HCT116 (cell line): ENCODE measurements at regions of chr7 and their contacts with region 1.

Region 1: GRCh38 chr7:143008007-143008901 is 18.7 kb downstream of the OR9A2 start:
- DNase-seq: peak; percentile 46
- ATAC-seq: peak; percentile 95
- H3K4me3 ChIP-seq: no peak overlapping the region
- H3K27ac ChIP-seq: no peak overlapping the region
- H3K4me1 ChIP-seq: peaks cover 0 to 1% of the 10 kb centered on the region in 2 experiments; a peak in 1 of 4 replicates
- H3K27me3 ChIP-seq: no peaks in the 10 kb centered on the region
- CTCF ChIP-seq: peak; percentile 91 to 99 (median 91)
- POLR2A ChIP-seq: no peak
- RAD21 ChIP-seq: peak; percentile 98

Region 2: DNA sequence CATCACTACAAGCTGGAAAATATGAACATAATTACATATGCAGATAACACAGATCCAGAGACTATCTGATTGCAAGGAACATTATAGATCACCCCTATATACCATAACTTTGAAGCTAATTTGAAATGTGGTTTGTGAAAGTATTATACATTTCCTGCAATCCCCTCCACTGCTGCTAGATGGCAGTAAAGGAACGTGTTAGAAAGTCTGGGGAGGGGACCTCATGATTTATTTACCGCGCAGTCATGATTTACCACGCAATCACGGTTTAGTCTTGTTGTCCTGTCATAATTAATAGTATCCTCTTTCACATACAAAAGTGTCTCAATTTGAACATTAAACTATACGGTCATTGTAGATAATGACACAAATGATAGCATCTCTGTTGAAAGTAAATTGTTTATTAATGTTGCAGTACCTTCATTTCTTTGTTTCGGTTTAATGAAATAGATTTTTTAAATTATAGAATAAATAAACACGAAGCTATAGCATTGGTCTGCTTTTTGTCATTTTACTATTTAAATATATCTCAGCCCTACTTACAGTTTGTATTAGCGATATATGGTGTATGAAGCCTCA is 404.3 kb before region 1 on chr7:
- CTCF ChIA-PET with region 1: interaction called, 15 read pairs
- POLR2A ChIA-PET with region 1: no interaction called
- RAD21 ChIA-PET with region 1: no interaction called
- intact Hi-C with region 1: loop called (anchors 10 kb)
- DNase-seq: peak; percentile 53
- ATAC-seq: peak; percentile 81
- H3K4me3 ChIP-seq: no peak overlapping the region; a peak in 2 of 4 replicates
- H3K27ac ChIP-seq: no peak overlapping the region
- H3K4me1 ChIP-seq: peaks cover 0 to 7% of the 10 kb centered on the region in 2 experiments; a peak in 1 of 4 replicates
- H3K27me3 ChIP-seq: no peaks in the 10 kb centered on the region
- CTCF ChIP-seq: peak; percentile 78 to 92 (median 90)
- POLR2A ChIP-seq: no peak
- RAD21 ChIP-seq: peak; percentile 86

Region 3: DNA sequence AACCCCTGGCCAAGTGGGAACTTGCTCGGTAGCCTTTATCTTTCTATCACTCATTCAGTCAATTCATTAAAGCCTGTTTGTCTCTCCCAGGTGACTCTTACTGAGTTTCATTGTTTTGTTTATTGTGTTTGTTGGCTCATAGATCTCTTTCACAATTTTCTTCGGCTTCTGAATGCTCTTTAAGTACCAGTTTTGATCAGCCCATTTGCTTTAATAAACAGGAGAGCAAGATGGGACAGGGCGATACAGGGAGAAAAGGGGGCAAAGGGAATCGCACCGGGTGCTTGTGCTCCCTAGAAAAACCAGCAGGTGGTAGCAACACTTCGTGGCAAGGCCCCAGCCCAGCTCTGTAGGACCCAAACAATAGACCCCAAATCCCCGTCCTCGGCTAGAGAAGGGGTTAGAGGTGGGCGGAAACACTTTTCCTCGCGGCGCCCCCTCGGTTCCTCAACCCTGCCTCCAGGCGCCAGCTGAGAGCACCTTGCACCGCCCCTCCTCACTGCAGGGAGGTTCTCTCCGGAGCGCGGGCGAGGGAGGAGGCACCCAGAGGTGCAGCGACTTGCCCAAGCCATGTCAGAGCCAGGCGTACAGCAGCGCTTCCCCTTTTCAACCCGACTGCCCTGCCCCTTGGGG is 154.4 kb before region 1 on chr7:
- CTCF ChIA-PET with region 1: interaction called, 12 read pairs
- POLR2A ChIA-PET with region 1: no interaction called
- RAD21 ChIA-PET with region 1: no interaction called
- intact Hi-C with region 1: loop called (anchors 1 kb)
- DNase-seq: peak; percentile 35
- ATAC-seq: peak; percentile 77
- H3K4me3 ChIP-seq: peak overlapping the region; percentile 76
- H3K27ac ChIP-seq: peak overlapping the region; percentile 68; the same call in 1 of the 2 replicates
- H3K4me1 ChIP-seq: peaks cover 8 to 16% of the 10 kb centered on the region in 2 experiments; a peak in 3 of 4 replicates
- H3K27me3 ChIP-seq: no peaks in the 10 kb centered on the region
- CTCF ChIP-seq: peak; percentile 74 to 85 (median 79); a peak in 5 of 6 replicates
- POLR2A ChIP-seq: no peak
- RAD21 ChIP-seq: peak; percentile 84

Region 4: DNA sequence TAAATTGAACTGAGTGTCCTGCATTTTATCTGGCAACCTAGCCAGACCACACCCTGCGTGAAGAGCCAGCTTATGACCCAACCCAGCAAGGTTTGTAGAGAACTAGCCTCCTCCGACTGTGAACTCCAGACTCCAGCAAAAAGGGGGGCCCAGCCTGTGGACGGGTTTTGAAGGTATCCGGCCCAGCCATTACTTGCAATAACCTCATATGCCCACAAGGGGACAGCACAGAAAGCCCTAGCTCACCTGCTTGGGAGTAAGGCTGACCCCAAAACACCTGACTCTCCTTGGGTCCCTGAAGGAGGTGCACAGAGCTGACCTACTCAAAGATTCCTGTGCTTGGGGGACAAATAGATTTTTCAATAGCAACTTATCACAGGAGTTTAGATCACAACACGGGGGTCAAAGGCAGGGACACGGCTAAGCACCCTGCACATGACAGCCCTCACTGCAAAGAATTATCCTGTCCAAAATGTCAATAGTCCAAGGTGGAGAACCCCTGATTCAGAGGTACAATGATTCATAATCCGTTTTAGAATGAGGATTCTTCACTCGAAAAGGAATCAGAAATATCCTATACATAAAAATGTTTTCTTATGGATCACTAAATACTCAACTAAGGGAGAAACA is 127.3 kb before region 1 on chr7:
- CTCF ChIA-PET with region 1: interaction called, 26 read pairs
- POLR2A ChIA-PET with region 1: no interaction called
- RAD21 ChIA-PET with region 1: no interaction called
- intact Hi-C with region 1: loop called (anchors 2 kb)
- DNase-seq: peak; percentile 37
- ATAC-seq: peak; percentile 74
- H3K4me3 ChIP-seq: no peak overlapping the region
- H3K27ac ChIP-seq: no peak overlapping the region
- H3K4me1 ChIP-seq: peaks cover 3 to 9% of the 10 kb centered on the region in 2 experiments; a peak in 3 of 4 replicates
- H3K27me3 ChIP-seq: peaks cover 6% of the 10 kb centered on the region; the same call in 1 of the 2 replicates
- CTCF ChIP-seq: peak; percentile 81 to 92 (median 90)
- POLR2A ChIP-seq: no peak
- RAD21 ChIP-seq: peak; percentile 70

Region 5: DNA sequence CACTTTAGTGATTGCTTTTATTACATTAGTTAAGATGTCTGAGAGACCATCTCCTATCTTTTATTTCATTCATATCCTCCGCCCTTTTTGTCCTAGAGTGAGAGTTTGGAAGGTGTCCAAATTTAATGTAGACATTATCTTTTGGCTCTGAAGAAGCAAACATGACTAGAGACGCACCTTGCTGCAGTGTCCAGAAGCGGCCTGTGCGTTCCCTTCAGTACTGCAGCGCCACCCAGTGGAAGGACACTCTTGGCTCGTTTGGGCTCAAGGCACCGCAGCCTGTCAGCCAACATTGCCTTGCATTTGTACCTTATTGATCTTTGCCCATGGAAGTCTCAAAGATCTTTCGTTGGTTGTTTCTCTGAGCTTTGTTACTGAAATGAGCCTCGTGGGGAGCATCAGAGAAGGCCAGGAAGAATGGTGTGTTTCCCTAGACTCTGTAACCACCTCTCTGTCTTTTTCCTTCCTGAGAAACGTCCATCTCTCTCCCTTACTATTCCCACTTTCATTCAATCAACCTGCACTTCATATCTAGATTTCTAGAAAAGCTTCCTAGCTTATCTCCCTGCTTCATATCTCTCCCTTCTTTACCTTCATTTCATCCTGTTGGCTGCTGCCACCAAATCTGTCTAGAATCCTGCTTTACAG is 297.3 kb after region 1 on chr7:
- CTCF ChIA-PET with region 1: no interaction called
- POLR2A ChIA-PET with region 1: no interaction called
- RAD21 ChIA-PET with region 1: no interaction called
- intact Hi-C with region 1: loop called (anchors 5 kb)
- DNase-seq: peak; percentile 44
- ATAC-seq: peak; percentile 97
- H3K4me3 ChIP-seq: no peak overlapping the region
- H3K27ac ChIP-seq: no peak overlapping the region
- H3K4me1 ChIP-seq: no peaks in the 10 kb centered on the region
- H3K27me3 ChIP-seq: no peaks in the 10 kb centered on the region
- CTCF ChIP-seq: peak; percentile 70 to 92 (median 89)
- POLR2A ChIP-seq: no peak
- RAD21 ChIP-seq: peak; percentile 76